ENCODE measurements at regions of chr17 and their contacts with region 1.

Region 1: DNA sequence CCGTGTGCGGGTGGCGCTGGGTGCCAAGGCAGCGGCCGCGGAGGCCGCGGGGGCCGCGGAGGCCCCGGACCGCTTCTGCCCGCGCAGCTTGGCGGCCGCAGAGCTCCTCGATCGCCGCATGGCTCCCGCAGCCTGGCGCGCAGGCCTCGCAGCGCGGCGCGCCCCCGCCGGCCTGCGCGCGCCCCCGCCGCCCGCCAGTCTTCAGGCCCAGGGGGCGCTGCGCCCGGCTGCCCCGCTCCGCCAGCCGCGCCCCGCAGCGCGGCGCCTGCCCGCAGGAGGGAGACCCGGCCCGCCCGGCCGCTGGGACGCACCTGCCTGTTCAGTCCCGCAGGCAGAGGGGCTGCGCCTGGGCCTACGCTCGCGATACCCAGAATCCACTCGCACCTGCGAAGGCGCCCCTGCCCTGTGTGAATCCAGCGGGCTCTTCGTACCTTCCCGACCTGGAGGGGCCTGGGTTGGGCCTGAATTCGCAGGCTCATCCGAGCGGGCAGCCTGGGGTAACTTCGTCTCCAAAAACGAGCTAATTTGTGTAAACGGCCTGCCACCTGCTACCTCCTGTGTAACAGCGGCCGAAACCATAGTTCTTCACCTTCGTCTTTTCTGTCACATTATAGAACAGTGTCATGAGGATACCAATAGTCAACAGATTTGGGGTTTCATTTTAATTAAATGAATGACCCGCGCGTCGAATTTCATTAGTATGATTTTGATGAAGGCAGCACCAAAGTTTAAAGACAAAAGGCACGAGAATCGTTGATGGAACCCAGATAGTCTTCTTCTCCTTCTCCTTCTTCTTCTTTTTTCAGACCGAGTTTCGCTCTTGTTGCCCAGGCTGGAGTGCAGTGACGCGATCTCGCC is at the start of gene CENPV:
- DNase-seq: peak; percentile 85
- CTCF ChIP-seq: peak; percentile 67

Region 2: GRCh38 chr17:16232391-16232790 is 121.2 kb before region 1 on chr17:
- CTCF ChIA-PET with region 1: no interaction called
- POLR2A ChIA-PET with region 1: no interaction called
- DNase-seq: no peak
- CTCF ChIP-seq: no peak

Region 3: DNA sequence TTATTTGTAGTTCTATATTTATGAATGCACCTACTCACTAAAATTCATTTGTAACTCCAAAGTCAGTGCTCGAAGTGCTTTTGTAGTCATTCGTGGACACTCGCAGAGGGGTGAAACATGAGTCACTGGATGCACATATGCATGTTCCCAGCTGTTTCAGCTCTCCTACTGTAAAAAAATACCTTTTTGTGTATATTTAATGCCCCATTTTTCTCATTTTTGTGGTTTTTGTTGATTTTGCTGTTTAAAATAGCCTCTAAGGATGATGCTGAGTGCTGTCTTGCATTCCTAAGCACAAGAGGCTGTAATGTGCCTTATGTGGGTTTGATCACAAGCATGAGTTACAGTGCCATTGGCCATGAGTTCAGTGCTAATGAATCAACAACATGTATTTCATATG is 30.9 kb before region 1 on chr17:
- CTCF ChIA-PET with region 1: interaction called, 10 read pairs
- POLR2A ChIA-PET with region 1: no interaction called
- DNase-seq: no peak
- CTCF ChIP-seq: no peak

Region 4: GRCh38 chr17:16342979-16343378 is 10.6 kb before region 1 on chr17:
- CTCF ChIA-PET with region 1: interaction called, 17 read pairs
- POLR2A ChIA-PET with region 1: no interaction called
- DNase-seq: no peak
- CTCF ChIP-seq: no peak

Region 5: DNA sequence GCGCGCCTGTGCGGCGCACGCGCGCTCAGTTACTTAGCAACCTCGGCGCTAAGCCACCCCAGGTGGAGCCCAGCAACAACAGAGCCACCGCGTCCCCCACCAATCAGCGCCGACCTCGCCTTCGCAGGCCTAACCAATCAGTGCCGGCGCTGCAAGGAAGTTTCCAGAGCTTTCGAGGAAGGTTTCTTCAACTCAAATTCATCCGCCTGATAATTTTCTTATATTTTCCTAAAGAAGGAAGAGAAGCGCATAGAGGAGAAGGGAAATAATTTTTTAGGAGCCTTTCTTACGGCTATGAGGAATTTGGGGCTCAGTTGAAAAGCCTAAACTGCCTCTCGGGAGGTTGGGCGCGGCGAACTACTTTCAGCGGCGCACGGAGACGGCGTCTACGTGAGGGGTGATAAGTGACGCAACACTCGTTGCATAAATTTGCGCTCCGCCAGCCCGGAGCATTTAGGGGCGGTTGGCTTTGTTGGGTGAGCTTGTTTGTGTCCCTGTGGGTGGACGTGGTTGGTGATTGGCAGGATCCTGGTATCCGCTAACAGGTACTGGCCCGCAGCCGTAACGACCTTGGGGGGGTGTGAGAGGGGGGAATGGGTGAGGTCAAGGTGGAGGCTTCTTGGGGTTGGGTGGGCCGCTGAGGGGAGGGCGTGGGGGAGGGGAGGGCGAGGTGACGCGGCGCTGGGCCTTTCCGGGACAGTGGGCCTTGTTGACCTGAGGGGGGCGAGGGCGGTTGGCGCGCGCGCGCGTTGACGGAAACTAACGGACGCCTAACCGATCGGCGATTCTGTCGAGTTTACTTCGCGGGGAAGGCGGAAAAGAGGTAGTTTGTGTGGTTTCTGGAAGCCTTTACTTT is 27.3 kb after region 1 on chr17 and contains the start of gene UBB:
- CTCF ChIA-PET with region 1: interaction called, 3 read pairs
- POLR2A ChIA-PET with region 1: interaction called, 13 read pairs
- DNase-seq: peak; percentile 94
- CTCF ChIP-seq: peak; percentile 6

Region 6: GRCh38 chr17:16415031-16415924 is 61.7 kb after region 1 on chr17 and contains the start of gene TRPV2:
- CTCF ChIA-PET with region 1: interaction called, 14 read pairs
- POLR2A ChIA-PET with region 1: no interaction called
- DNase-seq: peak; percentile 78
- CTCF ChIP-seq: peak; percentile 86

Region 7: DNA sequence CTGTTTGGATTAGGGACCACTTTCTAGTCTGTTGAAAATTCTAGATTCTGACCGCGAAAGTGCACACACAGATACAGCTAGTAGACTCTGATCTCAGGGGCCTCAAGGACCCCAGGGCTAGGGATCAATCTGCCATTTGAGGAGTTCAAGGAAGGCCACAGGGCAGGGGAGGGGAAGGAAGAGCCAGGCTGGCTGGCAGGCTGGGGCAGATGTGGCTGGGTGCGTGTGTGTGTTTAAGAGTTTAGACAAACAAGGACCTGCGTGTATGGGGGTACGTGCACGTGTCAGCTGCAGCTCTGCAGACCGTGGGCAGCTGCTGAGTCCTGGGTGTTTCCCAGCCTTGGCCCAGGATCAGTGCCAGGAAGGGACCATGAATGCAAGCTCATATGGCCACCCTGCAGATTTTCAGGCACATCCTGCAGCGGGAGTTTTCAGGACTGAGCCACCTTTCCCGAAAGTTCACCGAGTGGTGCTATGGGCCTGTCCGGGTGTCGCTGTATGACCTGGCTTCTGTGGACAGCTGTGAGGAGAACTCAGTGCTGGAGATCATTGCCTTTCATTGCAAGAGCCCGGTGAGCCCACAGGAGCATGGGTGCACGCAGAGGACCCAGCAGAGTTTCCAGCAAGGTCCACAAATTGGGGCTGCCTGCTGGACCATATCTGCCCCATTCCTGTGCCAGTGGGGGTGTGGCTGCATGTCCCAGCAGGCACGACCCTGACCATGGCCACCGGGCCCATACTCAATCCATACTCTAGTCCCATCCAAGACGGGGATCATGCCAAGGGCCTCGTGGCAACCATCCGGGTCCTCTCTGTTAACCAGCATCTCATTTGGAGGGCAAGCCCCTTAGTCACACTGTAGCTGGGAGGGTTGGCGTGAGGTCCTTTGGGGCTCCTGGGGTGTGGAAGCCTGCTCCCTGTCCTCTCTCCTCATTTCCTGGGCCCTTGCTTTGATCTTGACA is 72.4 kb after region 1 on chr17:
- CTCF ChIA-PET with region 1: no interaction called
- POLR2A ChIA-PET with region 1: no interaction called
- DNase-seq: no peak
- CTCF ChIP-seq: no peak

Region 8: GRCh38 chr17:16506188-16506587 is 152.6 kb after region 1 on chr17:
- CTCF ChIA-PET with region 1: no interaction called
- POLR2A ChIA-PET with region 1: no interaction called
- DNase-seq: no peak
- CTCF ChIP-seq: no peak

Measured in GM10248 (cell line).